Vagina (tissue), 2 donors: ENCODE measurements at regions of chr16 and their contacts with region 1.

Region 1: DNA sequence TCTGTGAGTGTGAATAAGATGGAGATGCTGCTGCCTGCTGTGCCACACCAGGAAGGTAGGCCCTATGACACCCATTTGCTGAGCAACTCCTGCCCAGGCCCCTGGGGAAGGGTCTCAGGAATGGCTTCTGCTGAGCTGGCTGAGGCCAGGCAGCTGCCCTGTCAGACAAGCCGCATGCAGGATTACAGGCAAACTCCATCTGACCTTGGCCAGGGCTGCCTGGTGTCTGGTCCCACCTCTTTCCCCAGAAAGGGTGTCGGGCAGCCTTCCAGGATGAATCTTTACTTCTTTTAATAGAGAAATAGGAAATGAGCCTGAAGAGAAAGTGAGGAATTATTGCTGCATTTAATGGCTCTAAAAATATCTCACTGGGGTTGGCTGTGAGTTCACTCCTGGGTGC is 182.5 kb downstream of the IRX5 start:
- DNase-seq: no peak
- H3K4me3 ChIP-seq: no peak overlapping the region
- H3K27ac ChIP-seq: no peak overlapping the region
- H3K4me1 ChIP-seq: no peaks in the 10 kb centered on the region
- H3K27me3 ChIP-seq: no peaks in the 10 kb centered on the region
- CTCF ChIP-seq: no peak
- POLR2A ChIP-seq: no peak

Region 2: DNA sequence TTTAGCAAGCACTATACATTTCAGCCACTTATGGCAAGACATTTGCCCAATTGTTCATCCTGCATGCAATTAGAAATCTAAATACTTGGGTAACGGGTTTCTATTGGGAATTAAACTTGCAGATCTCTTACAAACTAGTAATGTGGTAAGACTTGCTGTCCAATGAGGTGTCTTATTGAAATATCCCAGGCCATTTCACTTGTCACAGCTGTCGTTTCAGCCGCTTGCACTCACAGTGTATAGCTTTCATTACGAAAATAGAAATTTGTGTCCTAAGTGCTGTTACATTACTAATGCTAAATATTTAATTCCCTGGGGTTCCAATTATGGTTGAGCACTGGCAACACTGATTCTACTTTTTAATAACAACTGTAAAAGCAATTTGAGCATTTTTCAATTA is 222.8 kb before region 1 on chr16:
- intact Hi-C with region 1: no loop called
- DNase-seq: no peak
- H3K4me3 ChIP-seq: no peak overlapping the region
- H3K27ac ChIP-seq: no peak overlapping the region
- H3K4me1 ChIP-seq: no peaks in the 10 kb centered on the region
- H3K27me3 ChIP-seq: no peaks in the 10 kb centered on the region
- CTCF ChIP-seq: no peak
- POLR2A ChIP-seq: no peak

Region 3: DNA sequence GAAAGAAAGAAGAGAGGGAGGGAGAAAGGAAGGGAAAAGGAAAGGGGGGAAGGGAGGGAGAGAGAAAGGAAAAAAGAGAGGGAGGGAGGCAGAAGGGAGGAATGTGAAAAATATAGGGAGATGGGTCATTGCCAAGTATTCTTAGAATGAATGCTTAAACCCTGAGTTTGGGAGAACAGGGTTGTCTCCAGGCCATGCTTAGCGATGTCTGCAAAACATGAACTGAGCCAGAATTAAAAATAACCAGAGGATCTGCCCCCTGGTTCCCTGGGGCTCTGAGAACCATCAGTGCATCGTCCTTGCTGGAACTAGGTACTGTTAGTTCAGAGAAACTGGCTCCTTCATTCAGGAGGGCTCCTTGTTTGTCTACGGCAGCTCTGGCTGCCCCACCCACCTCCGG is 12.2 kb before region 1 on chr16:
- intact Hi-C with region 1: no loop called
- DNase-seq: no peak
- H3K4me3 ChIP-seq: no peak overlapping the region
- H3K27ac ChIP-seq: no peak overlapping the region
- H3K4me1 ChIP-seq: no peaks in the 10 kb centered on the region
- H3K27me3 ChIP-seq: no peaks in the 10 kb centered on the region
- CTCF ChIP-seq: no peak
- POLR2A ChIP-seq: no peak

Region 4: DNA sequence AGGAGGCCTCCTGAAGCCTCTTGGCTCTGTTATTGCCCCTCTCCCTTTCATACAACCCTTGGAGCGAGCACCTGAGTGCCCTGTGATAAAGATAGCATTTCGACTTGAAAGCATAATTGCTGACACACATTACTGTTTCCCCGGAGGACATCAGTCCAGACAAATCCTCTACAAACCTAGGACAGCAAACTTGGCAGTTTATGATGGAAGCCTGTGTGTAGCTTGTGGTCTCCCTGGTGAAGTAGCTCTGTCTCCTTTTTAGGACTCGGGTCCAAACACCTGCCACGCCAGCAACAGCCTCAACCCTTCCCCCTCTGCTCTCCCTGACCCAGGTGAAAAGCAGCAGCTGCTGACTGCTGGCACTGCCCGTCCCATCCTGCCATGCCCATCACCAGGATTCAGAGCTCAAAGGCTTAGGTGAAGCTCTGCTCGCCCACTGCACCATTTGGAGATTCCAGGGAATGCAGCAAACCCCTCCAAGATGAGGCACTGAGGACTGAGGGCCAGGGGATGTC is 266.7 kb after region 1 on chr16:
- intact Hi-C with region 1: loop called (anchors 5 kb)
- DNase-seq: no peak
- H3K4me3 ChIP-seq: no peak overlapping the region
- H3K27ac ChIP-seq: no peak overlapping the region
- H3K4me1 ChIP-seq: no peaks in the 10 kb centered on the region
- H3K27me3 ChIP-seq: no peaks in the 10 kb centered on the region
- CTCF ChIP-seq: no peak
- POLR2A ChIP-seq: no peak